CD8-positive, alpha-beta memory T cell (primary cell): ENCODE measurements at regions of chr22 and their contacts with region 1.

Region 1: GRCh38 chr22:37608477-37609239 is at the start of gene GGA1:
- DNase-seq: peak; percentile 94 to 98 (median 97)
- H3K4me3 ChIP-seq: peak within 1 kb of the TSS; percentile 76
- H3K4me3 Mint-ChIP-seq: peak within 1 kb of the TSS; percentile 89 to 98 (median 94)
- H3K27ac ChIP-seq: peak within 1 kb of the TSS; percentile 86
- H3K27ac Mint-ChIP-seq: peak within 1 kb of the TSS; percentile 92 to 99 (median 96)
- H3K4me1 ChIP-seq: peaks cover 67% of the 10 kb centered on the region
- H3K4me1 Mint-ChIP-seq: peaks cover 43 to 66% (median 45%) of the 10 kb centered on the region in 3 donors
- H3K27me3 ChIP-seq: no peaks in the 10 kb centered on the region
- H3K27me3 Mint-ChIP-seq: no peaks in the 10 kb centered on the region
- total RNA-seq, gene GGA1: 69.1 to 74.3 TPM

Region 2: DNA sequence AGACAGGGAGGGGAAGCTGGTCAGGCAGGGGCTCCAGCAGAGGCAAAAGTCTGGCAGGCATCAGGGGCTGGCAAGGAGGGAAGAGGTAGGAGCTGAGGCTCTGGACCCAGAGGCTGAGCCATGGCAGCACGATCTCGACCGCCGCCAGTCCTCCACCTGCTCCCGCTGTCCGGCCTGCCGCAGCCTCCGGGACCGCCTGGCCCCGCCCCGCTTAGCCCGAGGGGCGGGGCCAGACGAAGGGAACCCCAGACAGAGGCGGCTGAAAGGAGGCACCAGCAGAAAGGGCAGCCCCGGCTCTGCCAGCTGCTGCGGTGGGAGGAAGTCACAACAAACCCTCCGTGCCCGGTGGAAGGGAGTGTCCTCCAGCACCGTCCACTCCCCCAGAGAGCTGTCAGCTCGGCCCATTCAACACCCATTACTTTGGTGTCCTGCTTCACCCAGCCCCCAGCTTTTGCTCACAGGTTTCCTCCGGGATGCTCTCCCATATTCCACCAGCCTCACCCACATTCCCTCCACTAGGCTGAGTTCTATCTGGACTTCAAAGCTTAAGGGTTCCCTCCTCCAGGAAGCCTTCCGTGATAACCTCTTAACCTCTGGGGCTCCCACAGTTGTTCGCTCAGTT is 122.3 kb before region 1 on chr22 and contains the start of gene MFNG:
- CTCF ChIA-PET with region 1: interaction called, 21 read pairs
- POLR2A ChIA-PET with region 1: interaction called, 9 read pairs
- DNase-seq: peak; percentile 64 to 83 (median 70)
- H3K4me3 ChIP-seq: peak within 1 kb of the TSS; percentile 95
- H3K4me3 Mint-ChIP-seq: peak within 1 kb of the TSS; percentile 90 to 98 (median 94)
- H3K27ac ChIP-seq: peak within 1 kb of the TSS; percentile 76
- H3K27ac Mint-ChIP-seq: peak within 1 kb of the TSS; percentile 89 to 99 (median 98)
- H3K4me1 ChIP-seq: peaks cover 63% of the 10 kb centered on the region
- H3K4me1 Mint-ChIP-seq: peaks cover 47 to 75% (median 59%) of the 10 kb centered on the region in 3 donors
- H3K27me3 ChIP-seq: no peaks in the 10 kb centered on the region
- H3K27me3 Mint-ChIP-seq: no peaks in the 10 kb centered on the region
- total RNA-seq, gene MFNG: 162 to 171 TPM

Region 3: GRCh38 chr22:37588546-37589215 is 20.0 kb before region 1 on chr22:
- CTCF ChIA-PET with region 1: interaction called, 70 read pairs
- POLR2A ChIA-PET with region 1: interaction called, 14 read pairs
- DNase-seq: no peak
- H3K4me3 ChIP-seq: no peak overlapping the region
- H3K4me3 Mint-ChIP-seq: no peak overlapping the region
- H3K27ac ChIP-seq: no peak overlapping the region
- H3K27ac Mint-ChIP-seq: no peak overlapping the region
- H3K4me1 ChIP-seq: peaks cover 6% of the 10 kb centered on the region
- H3K4me1 Mint-ChIP-seq: peaks cover 11 to 14% (median 13%) of the 10 kb centered on the region in 3 donors
- H3K27me3 ChIP-seq: no peaks in the 10 kb centered on the region
- H3K27me3 Mint-ChIP-seq: peaks cover 8 to 24% of the 10 kb centered on the region in 2 donors

Region 4: GRCh38 chr22:37633625-37634416 is 25.2 kb after region 1 on chr22:
- CTCF ChIA-PET with region 1: interaction called, 54 read pairs
- POLR2A ChIA-PET with region 1: interaction called, 19 read pairs
- DNase-seq: peak; percentile 47 to 80 (median 54)
- H3K4me3 ChIP-seq: peak overlapping the region; percentile 50
- H3K4me3 Mint-ChIP-seq: peak overlapping the region; percentile 72 to 95 (median 83)
- H3K27ac ChIP-seq: peak overlapping the region; percentile 59
- H3K27ac Mint-ChIP-seq: peak overlapping the region; percentile 89 to 99 (median 96)
- H3K4me1 ChIP-seq: peaks cover 77% of the 10 kb centered on the region
- H3K4me1 Mint-ChIP-seq: peaks cover 66 to 92% (median 69%) of the 10 kb centered on the region in 3 donors
- H3K27me3 ChIP-seq: no peaks in the 10 kb centered on the region
- H3K27me3 Mint-ChIP-seq: no peaks in the 10 kb centered on the region

Region 5: GRCh38 chr22:37658133-37659065 is 49.7 kb after region 1 on chr22 and contains the start of gene PDXP:
- CTCF ChIA-PET with region 1: interaction called, 27 read pairs
- POLR2A ChIA-PET with region 1: interaction called, 13 read pairs
- DNase-seq: peak; percentile 96 to 98 (median 97)
- H3K4me3 ChIP-seq: peak within 1 kb of the TSS; percentile 69
- H3K4me3 Mint-ChIP-seq: peak within 1 kb of the TSS; percentile 85 to 91 (median 88)
- H3K27ac ChIP-seq: peak within 1 kb of the TSS; percentile 52
- H3K27ac Mint-ChIP-seq: peak within 1 kb of the TSS; percentile 66 to 97 (median 94)
- H3K4me1 ChIP-seq: peaks cover 31% of the 10 kb centered on the region
- H3K4me1 Mint-ChIP-seq: peaks cover 34 to 44% (median 36%) of the 10 kb centered on the region in 3 donors
- H3K27me3 ChIP-seq: no peaks in the 10 kb centered on the region
- H3K27me3 Mint-ChIP-seq: no peaks in the 10 kb centered on the region
- total RNA-seq, gene PDXP: 36.0 to 37.8 TPM

Region 6: GRCh38 chr22:37686002-37686982 is 77.6 kb after region 1 on chr22 and contains the start of gene NOL12:
- CTCF ChIA-PET with region 1: interaction called, 38 read pairs
- POLR2A ChIA-PET with region 1: interaction called, 8 read pairs
- DNase-seq: peak; percentile 62 to 84 (median 74)
- H3K4me3 ChIP-seq: peak within 1 kb of the TSS; percentile 88
- H3K4me3 Mint-ChIP-seq: peak within 1 kb of the TSS; percentile 83 to 97 (median 94)
- H3K27ac ChIP-seq: peak within 1 kb of the TSS; percentile 83
- H3K27ac Mint-ChIP-seq: peak within 1 kb of the TSS; percentile 32 to 100 (median 96)
- H3K4me1 ChIP-seq: peaks cover 21% of the 10 kb centered on the region
- H3K4me1 Mint-ChIP-seq: peaks cover 26 to 38% (median 34%) of the 10 kb centered on the region in 3 donors
- H3K27me3 ChIP-seq: no peaks in the 10 kb centered on the region
- H3K27me3 Mint-ChIP-seq: peaks cover 0 to 1% of the 10 kb centered on the region in 2 donors
- total RNA-seq, gene NOL12: 53.6 to 57.2 TPM